ENCODE measurements at regions of chr20 and their contacts with region 1.

Region 1: GRCh38 chr20:6920991-6921613 is 153.6 kb downstream of the BMP2 start:
- DNase-seq: no peak
- ATAC-seq: peak; percentile 66
- H3K4me3 ChIP-seq: no peak overlapping the region
- H3K27ac ChIP-seq: no peak overlapping the region
- H3K4me1 ChIP-seq: no peaks in the 10 kb centered on the region
- H3K27me3 ChIP-seq: no peaks in the 10 kb centered on the region
- CTCF ChIP-seq: no peak
- EP300 ChIP-seq: peak in 1 of 2 experiments; percentile 46; a peak in 1 of 4 replicates
- POLR2A ChIP-seq: no peak
- RAD21 ChIP-seq: no peak

Region 2: GRCh38 chr20:6525447-6526303 is 395.4 kb before region 1 on chr20:
- CTCF ChIA-PET with region 1: no interaction called
- POLR2A ChIA-PET with region 1: no interaction called
- RAD21 ChIA-PET with region 1: no interaction called
- SMC1A ChIA-PET with region 1: no interaction called
- in situ Hi-C with region 1: no loop called
- intact Hi-C with region 1: no loop called
- DNase-seq: no peak
- ATAC-seq: peak; percentile 31; the same call in 1 of the 3 replicates
- H3K4me3 ChIP-seq: no peak overlapping the region
- H3K27ac ChIP-seq: no peak overlapping the region
- H3K4me1 ChIP-seq: no peaks in the 10 kb centered on the region
- H3K27me3 ChIP-seq: no peaks in the 10 kb centered on the region
- CTCF ChIP-seq: no peak
- EP300 ChIP-seq: no peak
- POLR2A ChIP-seq: no peak
- RAD21 ChIP-seq: no peak

Region 3: GRCh38 chr20:6802227-6802626 is 118.9 kb before region 1 on chr20:
- CTCF ChIA-PET with region 1: no interaction called
- POLR2A ChIA-PET with region 1: no interaction called
- RAD21 ChIA-PET with region 1: no interaction called
- SMC1A ChIA-PET with region 1: no interaction called
- in situ Hi-C with region 1: no loop called
- intact Hi-C with region 1: no loop called
- DNase-seq: no peak
- ATAC-seq: no peak
- H3K4me3 ChIP-seq: no peak overlapping the region
- H3K27ac ChIP-seq: no peak overlapping the region
- H3K4me1 ChIP-seq: no peaks in the 10 kb centered on the region
- H3K27me3 ChIP-seq: no peaks in the 10 kb centered on the region
- CTCF ChIP-seq: no peak
- EP300 ChIP-seq: no peak
- POLR2A ChIP-seq: no peak
- RAD21 ChIP-seq: no peak

Region 4: DNA sequence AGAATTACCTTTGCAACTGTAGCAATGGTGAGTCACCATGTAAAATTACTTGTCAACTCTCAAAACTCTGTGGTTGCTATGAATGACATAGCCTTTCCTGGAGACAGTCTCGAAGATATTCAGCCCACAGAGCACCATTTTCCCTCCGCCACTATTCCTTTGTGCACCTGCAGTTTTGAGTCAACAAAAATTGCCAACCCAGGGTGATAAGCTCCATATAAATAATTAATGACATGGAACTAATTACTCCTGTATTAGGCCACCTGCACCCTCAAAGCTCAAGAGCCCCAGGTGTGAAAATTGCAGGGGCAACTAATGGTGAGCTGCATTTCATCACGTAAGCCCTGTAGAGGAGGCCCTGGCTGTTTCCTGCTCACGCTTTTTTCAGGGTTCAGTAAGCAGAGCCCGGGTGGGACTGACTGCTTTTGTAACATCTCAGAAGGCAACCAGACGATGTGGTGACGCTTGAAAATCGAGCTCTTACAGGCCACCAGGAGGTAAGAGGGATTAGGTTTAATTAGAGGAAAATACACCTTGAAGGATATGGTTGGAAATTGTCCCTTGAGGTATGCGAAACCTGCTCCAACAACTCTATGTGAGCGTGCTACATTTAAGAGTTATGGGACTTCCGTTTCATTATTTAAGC is 82.8 kb before region 1 on chr20:
- CTCF ChIA-PET with region 1: interaction called, 57 read pairs
- POLR2A ChIA-PET with region 1: interaction called, 100 read pairs
- RAD21 ChIA-PET with region 1: interaction called, 197 read pairs
- SMC1A ChIA-PET with region 1: interaction called, 215 read pairs
- in situ Hi-C with region 1: no loop called
- intact Hi-C with region 1: no loop called
- DNase-seq: peak; percentile 25
- ATAC-seq: peak; percentile 84
- H3K4me3 ChIP-seq: no peak overlapping the region
- H3K27ac ChIP-seq: no peak overlapping the region
- H3K4me1 ChIP-seq: no peaks in the 10 kb centered on the region
- H3K27me3 ChIP-seq: no peaks in the 10 kb centered on the region
- CTCF ChIP-seq: no peak
- EP300 ChIP-seq: peak; percentile 18 to 60; a peak in 2 of 4 replicates
- POLR2A ChIP-seq: no peak
- RAD21 ChIP-seq: no peak

Region 5: GRCh38 chr20:6855104-6855503 is 66.0 kb before region 1 on chr20:
- CTCF ChIA-PET with region 1: interaction called, 6 read pairs
- POLR2A ChIA-PET with region 1: interaction called, 6 read pairs
- RAD21 ChIA-PET with region 1: interaction called, 70 read pairs
- SMC1A ChIA-PET with region 1: interaction called, 370 read pairs
- in situ Hi-C with region 1: no loop called
- intact Hi-C with region 1: no loop called
- DNase-seq: no peak
- ATAC-seq: no peak; the same call in 2 of the 3 replicates
- H3K4me3 ChIP-seq: no peak overlapping the region
- H3K27ac ChIP-seq: no peak overlapping the region
- H3K4me1 ChIP-seq: no peaks in the 10 kb centered on the region
- H3K27me3 ChIP-seq: no peaks in the 10 kb centered on the region
- CTCF ChIP-seq: no peak
- EP300 ChIP-seq: no peak
- POLR2A ChIP-seq: no peak
- RAD21 ChIP-seq: no peak

Region 6: DNA sequence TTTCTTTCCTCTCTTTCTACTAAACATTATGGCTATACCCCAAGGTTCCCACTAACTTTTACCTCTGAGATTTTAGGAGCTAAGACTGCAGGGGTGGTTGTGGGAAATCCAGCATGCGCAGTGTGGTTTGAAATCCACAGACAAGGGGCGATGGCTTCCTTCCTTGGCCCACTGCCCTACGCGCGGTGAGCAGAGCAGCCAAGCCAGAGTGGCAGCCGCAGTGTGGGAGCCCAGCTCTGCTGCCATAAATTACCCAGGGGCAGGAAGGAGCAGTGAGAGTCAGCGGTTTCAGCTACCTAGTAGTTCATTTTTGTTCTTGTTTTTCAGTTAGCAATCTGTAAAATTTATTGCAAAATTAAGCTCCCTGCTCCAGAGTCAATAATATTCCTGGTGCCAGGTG is 52.2 kb before region 1 on chr20:
- CTCF ChIA-PET with region 1: interaction called, 15 read pairs
- POLR2A ChIA-PET with region 1: interaction called, 46 read pairs
- RAD21 ChIA-PET with region 1: interaction called, 93 read pairs
- SMC1A ChIA-PET with region 1: interaction called, 370 read pairs
- in situ Hi-C with region 1: no loop called
- intact Hi-C with region 1: no loop called
- DNase-seq: no peak
- ATAC-seq: peak; percentile 68
- H3K4me3 ChIP-seq: no peak overlapping the region
- H3K27ac ChIP-seq: no peak overlapping the region
- H3K4me1 ChIP-seq: no peaks in the 10 kb centered on the region
- H3K27me3 ChIP-seq: no peaks in the 10 kb centered on the region; a peak in 1 of 4 replicates
- CTCF ChIP-seq: no peak
- EP300 ChIP-seq: no peak
- POLR2A ChIP-seq: no peak
- RAD21 ChIP-seq: no peak

Region 7: DNA sequence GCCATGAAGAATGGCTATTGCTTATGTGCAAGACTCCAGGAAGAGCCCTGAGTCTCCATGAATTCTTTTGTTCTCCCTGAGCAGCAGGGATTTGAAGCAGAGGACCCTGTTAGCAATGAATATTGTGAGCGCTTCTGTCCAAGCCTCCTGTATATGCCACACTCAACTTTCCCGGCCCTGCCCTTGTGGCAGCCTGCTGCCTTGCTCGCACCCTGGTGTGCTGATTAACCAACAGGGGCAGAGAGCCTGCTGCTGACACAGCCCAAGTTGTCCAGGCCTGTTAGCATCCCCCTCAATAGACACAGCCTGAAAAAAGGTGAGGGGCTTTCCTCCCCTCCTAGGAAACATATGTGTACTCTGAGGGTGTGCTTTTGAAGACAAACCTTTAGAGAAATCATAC is 22.2 kb before region 1 on chr20:
- CTCF ChIA-PET with region 1: interaction called, 12 read pairs
- POLR2A ChIA-PET with region 1: interaction called, 18 read pairs
- RAD21 ChIA-PET with region 1: interaction called, 30 read pairs
- SMC1A ChIA-PET with region 1: interaction called, 171 read pairs
- in situ Hi-C with region 1: no loop called
- intact Hi-C with region 1: no loop called
- DNase-seq: no peak
- ATAC-seq: peak; percentile 52
- H3K4me3 ChIP-seq: no peak overlapping the region
- H3K27ac ChIP-seq: no peak overlapping the region
- H3K4me1 ChIP-seq: no peaks in the 10 kb centered on the region
- H3K27me3 ChIP-seq: no peaks in the 10 kb centered on the region; a peak in 1 of 4 replicates
- CTCF ChIP-seq: no peak
- EP300 ChIP-seq: no peak
- POLR2A ChIP-seq: no peak
- RAD21 ChIP-seq: no peak

Region 8: DNA sequence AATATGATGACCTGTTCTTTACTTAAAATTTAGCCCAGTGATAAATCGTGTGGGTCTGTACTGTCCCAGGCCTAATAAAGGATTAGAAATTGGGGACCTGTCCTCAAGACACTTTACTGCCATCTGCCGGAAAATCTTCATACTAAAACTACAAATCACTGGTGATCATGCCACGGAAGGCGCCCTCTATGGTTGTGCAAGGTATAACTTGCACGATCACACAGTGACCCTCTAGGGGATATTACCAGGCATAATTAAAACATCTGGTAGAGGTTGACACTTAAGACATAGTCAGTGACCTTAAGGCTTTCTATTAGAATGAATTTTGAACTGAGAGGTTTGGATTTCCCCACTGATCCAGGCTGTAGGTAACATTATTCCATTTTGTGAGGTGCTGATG is 18.9 kb after region 1 on chr20:
- CTCF ChIA-PET with region 1: interaction called, 35 read pairs
- POLR2A ChIA-PET with region 1: interaction called, 35 read pairs
- RAD21 ChIA-PET with region 1: interaction called, 12 read pairs
- SMC1A ChIA-PET with region 1: interaction called, 80 read pairs
- in situ Hi-C with region 1: no loop called
- intact Hi-C with region 1: no loop called
- DNase-seq: no peak
- ATAC-seq: peak; percentile 80
- H3K4me3 ChIP-seq: no peak overlapping the region
- H3K27ac ChIP-seq: no peak overlapping the region
- H3K4me1 ChIP-seq: no peaks in the 10 kb centered on the region
- H3K27me3 ChIP-seq: no peaks in the 10 kb centered on the region
- CTCF ChIP-seq: peak; percentile 16 to 61 (median 28); a peak in 4 of 6 replicates
- EP300 ChIP-seq: no peak
- POLR2A ChIP-seq: no peak
- RAD21 ChIP-seq: peak; percentile 16; the same call in 1 of the 2 replicates

Region 9: GRCh38 chr20:7180256-7181045 is 259.3 kb after region 1 on chr20:
- CTCF ChIA-PET with region 1: no interaction called
- POLR2A ChIA-PET with region 1: no interaction called
- RAD21 ChIA-PET with region 1: no interaction called
- SMC1A ChIA-PET with region 1: no interaction called
- in situ Hi-C with region 1: no loop called
- intact Hi-C with region 1: no loop called
- DNase-seq: no peak
- ATAC-seq: no peak
- H3K4me3 ChIP-seq: no peak overlapping the region
- H3K27ac ChIP-seq: no peak overlapping the region
- H3K4me1 ChIP-seq: no peaks in the 10 kb centered on the region
- H3K27me3 ChIP-seq: no peaks in the 10 kb centered on the region
- CTCF ChIP-seq: no peak
- EP300 ChIP-seq: no peak
- POLR2A ChIP-seq: no peak
- RAD21 ChIP-seq: no peak

Measured in GM12878 (cell line).